IMR-90 (cell line): ENCODE measurements at regions of chr3 and their contacts with region 1.

Region 1: GRCh38 chr3:8579096-8579495 is 65.5 kb downstream of the SSUH2 start:
- DNase-seq: peak; percentile 42
- ATAC-seq: no peak
- H3K4me3 ChIP-seq: no peak overlapping the region
- H3K27ac ChIP-seq: no peak overlapping the region
- H3K4me1 ChIP-seq: peaks cover 32% of the 10 kb centered on the region
- H3K27me3 ChIP-seq: no peaks in the 10 kb centered on the region
- CTCF ChIP-seq: no peak
- POLR2A ChIP-seq: no peak
- RAD21 ChIP-seq: no peak

Region 2: GRCh38 chr3:8560366-8561007 is 18.6 kb before region 1 on chr3:
- CTCF ChIA-PET with region 1: interaction called, 3 read pairs
- POLR2A ChIA-PET with region 1: interaction called, 7 read pairs
- dilution Hi-C with region 1: no loop called
- in situ Hi-C with region 1: no loop called
- intact Hi-C with region 1: loop called (anchors 1 kb)
- DNase-seq: peak; percentile 94
- ATAC-seq: peak; percentile 86
- H3K4me3 ChIP-seq: no peak overlapping the region
- H3K27ac ChIP-seq: peak overlapping the region; percentile 58
- H3K4me1 ChIP-seq: peaks cover 26% of the 10 kb centered on the region
- H3K27me3 ChIP-seq: no peaks in the 10 kb centered on the region
- CTCF ChIP-seq: no peak
- POLR2A ChIP-seq: no peak; the same call in 1 of the 2 replicates
- RAD21 ChIP-seq: 0 out of 2 replicates have a peak, but pooled peaks have one; percentile 1

Region 3: DNA sequence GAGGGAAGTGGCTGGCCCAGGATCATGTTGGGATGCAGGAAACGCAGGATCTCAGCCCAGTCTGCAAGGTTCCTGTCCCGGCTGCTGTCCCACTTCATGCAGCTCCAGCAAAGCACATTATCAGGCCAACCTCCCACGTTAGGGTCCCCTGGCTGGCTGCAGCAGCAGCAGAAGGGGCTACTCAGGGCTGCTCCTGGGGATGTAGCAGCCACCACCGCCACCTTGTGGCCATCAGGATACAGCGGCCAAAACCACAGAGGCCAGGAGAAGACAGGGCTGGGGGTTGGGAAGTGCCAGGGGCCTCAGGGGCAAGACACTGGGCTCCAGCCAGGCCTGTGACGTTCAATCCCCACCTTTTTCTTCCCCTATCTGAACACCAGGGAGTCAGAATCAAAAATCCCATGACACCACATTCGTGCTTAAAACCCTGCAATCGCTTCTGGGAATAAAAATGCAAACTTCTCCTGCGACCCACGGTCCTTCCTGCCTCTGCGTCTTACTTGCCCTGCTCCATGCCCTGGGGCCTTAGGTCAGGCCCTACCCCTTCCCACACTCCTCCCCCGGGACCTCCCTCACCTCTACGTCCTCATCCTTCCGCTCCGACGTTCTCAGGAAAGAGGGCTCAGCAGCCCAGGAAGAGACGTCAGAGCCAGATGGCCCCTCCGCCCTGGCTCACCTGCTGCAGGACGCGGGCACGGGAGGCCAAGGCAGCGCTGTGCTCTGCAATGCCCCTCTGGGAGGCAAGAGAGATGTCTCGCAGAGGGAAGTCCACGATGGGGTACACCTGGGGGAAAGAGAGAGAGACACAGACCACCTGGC is 44.0 kb after region 1 on chr3:
- CTCF ChIA-PET with region 1: interaction called, 7 read pairs
- POLR2A ChIA-PET with region 1: no interaction called
- dilution Hi-C with region 1: no loop called
- in situ Hi-C with region 1: no loop called
- intact Hi-C with region 1: loop called (anchors 5 kb)
- DNase-seq: peak; percentile 70
- ATAC-seq: peak; percentile 91
- H3K4me3 ChIP-seq: no peak overlapping the region
- H3K27ac ChIP-seq: no peak overlapping the region
- H3K4me1 ChIP-seq: peaks cover 32% of the 10 kb centered on the region
- H3K27me3 ChIP-seq: no peaks in the 10 kb centered on the region; the same call in 1 of the 2 replicates
- CTCF ChIP-seq: peak; percentile 94
- POLR2A ChIP-seq: no peak
- RAD21 ChIP-seq: peak; percentile 94

Region 4: DNA sequence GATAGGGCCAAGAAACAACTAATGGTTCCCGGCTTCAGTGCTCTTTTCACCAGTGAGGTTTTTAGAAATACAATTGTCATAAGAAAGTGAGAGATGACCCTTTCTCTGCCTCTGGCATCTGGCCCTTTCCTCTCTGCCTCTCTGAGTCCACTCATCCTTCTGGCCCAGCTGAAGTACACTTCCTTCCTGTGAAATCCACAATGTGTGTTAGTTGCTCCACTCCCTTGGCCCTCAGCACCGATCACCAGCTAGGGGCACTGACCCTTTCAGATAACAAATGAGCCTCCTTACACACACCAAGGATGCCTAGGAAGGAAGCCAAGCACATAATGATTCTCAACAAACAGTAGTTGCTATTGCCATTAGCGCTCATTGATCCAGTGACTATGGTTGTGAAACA is 151.6 kb after region 1 on chr3:
- CTCF ChIA-PET with region 1: no interaction called
- POLR2A ChIA-PET with region 1: no interaction called
- dilution Hi-C with region 1: no loop called
- in situ Hi-C with region 1: no loop called
- intact Hi-C with region 1: no loop called
- DNase-seq: peak; percentile 27
- ATAC-seq: peak; percentile 35; the same call in 1 of the 2 replicates
- H3K4me3 ChIP-seq: no peak overlapping the region
- H3K27ac ChIP-seq: no peak overlapping the region
- H3K4me1 ChIP-seq: peaks cover 2% of the 10 kb centered on the region; the same call in 1 of the 2 replicates
- H3K27me3 ChIP-seq: no peaks in the 10 kb centered on the region; the same call in 1 of the 2 replicates
- CTCF ChIP-seq: no peak
- POLR2A ChIP-seq: no peak
- RAD21 ChIP-seq: no peak